GM12878 (cell line): ENCODE measurements at regions of chr18 and their contacts with region 1.

Region 1: GRCh38 chr18:23503038-23503962 is at the start of gene RMC1:
- DNase-seq: peak; percentile 66
- ATAC-seq: peak; percentile 86
- H3K4me3 ChIP-seq: peak within 1 kb of the TSS; percentile 96
- H3K27ac ChIP-seq: peak within 1 kb of the TSS; percentile 94
- H3K4me1 ChIP-seq: peaks cover 18% of the 10 kb centered on the region
- H3K27me3 ChIP-seq: no peaks in the 10 kb centered on the region
- CTCF ChIP-seq: peak; percentile 20 to 38 (median 37); a peak in 5 of 6 replicates
- EP300 ChIP-seq: peak in 1 of 2 experiments; percentile 31; a peak in 1 of 4 replicates
- POLR2A ChIP-seq: peak; percentile 93
- RAD21 ChIP-seq: peak; percentile 41; the same call in 1 of the 2 replicates
- polyA plus RNA-seq, gene RMC1: 8.4 to 25.7 TPM

Region 2: DNA sequence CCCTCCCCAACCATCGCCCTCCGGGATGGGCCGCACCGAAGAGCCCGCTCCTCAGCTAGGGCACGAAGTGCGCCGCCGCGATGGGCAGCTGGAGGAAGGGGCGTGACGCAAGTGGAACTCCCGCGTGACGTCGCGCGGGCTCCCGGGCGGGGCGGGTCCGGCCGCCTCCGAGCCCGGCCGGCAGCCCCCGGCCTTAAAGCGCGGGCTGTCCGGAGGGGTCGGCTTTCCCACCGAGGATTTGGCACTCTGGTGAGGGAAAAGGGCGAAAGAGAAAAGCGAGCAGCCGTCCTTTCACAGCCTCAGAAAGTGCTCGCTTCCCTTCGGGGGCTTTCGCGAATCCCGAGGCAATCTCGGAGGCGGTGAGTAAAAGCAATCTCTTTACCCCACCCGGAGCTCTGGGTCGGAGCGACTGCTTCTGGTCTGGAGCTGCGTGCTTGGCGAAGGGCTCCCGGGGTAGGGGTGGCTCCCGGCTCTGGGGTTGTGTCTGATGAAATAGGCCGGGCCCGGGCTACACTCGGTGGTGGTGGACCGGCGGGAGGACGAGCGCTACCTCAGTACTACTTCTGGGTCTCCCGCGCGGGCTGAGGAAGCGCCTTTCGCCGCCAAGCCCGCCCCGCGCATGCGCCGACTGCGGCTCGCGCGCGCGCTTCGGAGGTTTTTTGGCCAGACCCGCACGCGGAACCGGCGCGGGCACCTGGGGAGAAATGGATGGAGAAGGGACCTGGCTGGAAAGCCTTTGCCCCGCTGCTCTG is 569.9 kb before region 1 on chr18 and contains the start of gene RBBP8:
- CTCF ChIA-PET with region 1: interaction called, 11 read pairs
- POLR2A ChIA-PET with region 1: interaction called, 4 read pairs
- RAD21 ChIA-PET with region 1: no interaction called
- SMC1A ChIA-PET with region 1: interaction called, 4 read pairs
- in situ Hi-C with region 1: no loop called
- intact Hi-C with region 1: loop called (anchors 10 kb)
- DNase-seq: peak; percentile 36
- ATAC-seq: peak; percentile 85
- H3K4me3 ChIP-seq: peak within 1 kb of the TSS; percentile 86
- H3K27ac ChIP-seq: peak within 1 kb of the TSS; percentile 92
- H3K4me1 ChIP-seq: peaks cover 6% of the 10 kb centered on the region
- H3K27me3 ChIP-seq: no peaks in the 10 kb centered on the region
- CTCF ChIP-seq: no peak
- EP300 ChIP-seq: no peak
- POLR2A ChIP-seq: peak; percentile 80
- RAD21 ChIP-seq: no peak
- polyA plus RNA-seq, gene RBBP8: 49.4 to 59.5 TPM

Region 3: GRCh38 chr18:23416298-23416697 is 87.0 kb before region 1 on chr18:
- CTCF ChIA-PET with region 1: interaction called, 8 read pairs
- POLR2A ChIA-PET with region 1: no interaction called
- RAD21 ChIA-PET with region 1: interaction called, 12 read pairs
- SMC1A ChIA-PET with region 1: interaction called, 6 read pairs
- in situ Hi-C with region 1: no loop called
- intact Hi-C with region 1: no loop called
- DNase-seq: no peak
- ATAC-seq: peak; percentile 29; the same call in 2 of the 3 replicates
- H3K4me3 ChIP-seq: no peak overlapping the region
- H3K27ac ChIP-seq: no peak overlapping the region
- H3K4me1 ChIP-seq: no peaks in the 10 kb centered on the region; the same call in 1 of the 2 replicates
- H3K27me3 ChIP-seq: no peaks in the 10 kb centered on the region
- CTCF ChIP-seq: no peak
- EP300 ChIP-seq: no peak
- POLR2A ChIP-seq: no peak
- RAD21 ChIP-seq: no peak

Region 4: GRCh38 chr18:23458830-23459529 is 44.3 kb before region 1 on chr18:
- CTCF ChIA-PET with region 1: interaction called, 19 read pairs
- POLR2A ChIA-PET with region 1: interaction called, 14 read pairs
- RAD21 ChIA-PET with region 1: interaction called, 11 read pairs
- SMC1A ChIA-PET with region 1: interaction called, 18 read pairs
- in situ Hi-C with region 1: no loop called
- intact Hi-C with region 1: loop called (anchors 5 kb)
- DNase-seq: no peak
- ATAC-seq: peak; percentile 85
- H3K4me3 ChIP-seq: peak overlapping the region; percentile 48; the same call in 1 of the 2 replicates
- H3K27ac ChIP-seq: no peak overlapping the region
- H3K4me1 ChIP-seq: no peaks in the 10 kb centered on the region
- H3K27me3 ChIP-seq: no peaks in the 10 kb centered on the region
- CTCF ChIP-seq: no peak
- EP300 ChIP-seq: no peak
- POLR2A ChIP-seq: no peak
- RAD21 ChIP-seq: no peak

Region 5: DNA sequence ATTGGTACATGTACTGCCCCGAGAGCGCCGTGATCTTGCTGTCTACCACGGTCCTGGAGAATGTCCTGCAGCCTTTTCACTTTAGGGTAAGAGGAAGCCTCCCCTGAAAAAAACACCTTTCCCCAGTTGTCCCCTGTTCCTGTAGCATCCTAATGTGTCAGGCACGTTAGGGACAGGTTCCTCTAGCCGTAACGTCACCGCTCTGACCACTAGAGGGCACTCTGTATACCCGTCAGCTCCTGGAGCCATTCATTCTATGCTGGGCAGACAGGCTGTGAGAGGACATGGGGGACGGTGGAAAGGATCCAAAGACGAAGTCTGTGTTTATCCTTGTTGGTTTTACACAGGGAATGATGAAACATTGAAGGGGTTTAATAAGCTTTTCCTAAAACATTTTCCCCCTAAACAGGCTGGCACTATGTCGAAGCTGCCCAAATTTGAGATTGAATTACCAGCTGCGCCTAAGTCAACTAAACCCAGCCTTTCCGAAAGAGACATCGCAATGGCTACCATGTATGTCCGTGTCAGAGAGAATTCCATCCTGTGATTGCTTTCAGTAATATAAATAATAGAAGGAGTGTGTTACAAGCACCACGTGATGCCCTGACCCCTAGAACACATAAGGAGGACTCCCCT is 12.7 kb after region 1 on chr18:
- CTCF ChIA-PET with region 1: interaction called, 30 read pairs
- POLR2A ChIA-PET with region 1: interaction called, 3 read pairs
- RAD21 ChIA-PET with region 1: interaction called, 7 read pairs
- SMC1A ChIA-PET with region 1: interaction called, 8 read pairs
- in situ Hi-C with region 1: no loop called
- intact Hi-C with region 1: no loop called
- DNase-seq: peak; percentile 39
- ATAC-seq: peak; percentile 99
- H3K4me3 ChIP-seq: no peak overlapping the region
- H3K27ac ChIP-seq: no peak overlapping the region
- H3K4me1 ChIP-seq: peaks cover 3% of the 10 kb centered on the region; the same call in 1 of the 2 replicates
- H3K27me3 ChIP-seq: no peaks in the 10 kb centered on the region
- CTCF ChIP-seq: peak; percentile 89 to 97 (median 94)
- EP300 ChIP-seq: no peak
- POLR2A ChIP-seq: no peak
- RAD21 ChIP-seq: peak; percentile 76

Region 6: GRCh38 chr18:23812546-23813440 is 309.5 kb after region 1 on chr18:
- CTCF ChIA-PET with region 1: no interaction called
- POLR2A ChIA-PET with region 1: no interaction called
- RAD21 ChIA-PET with region 1: interaction called, 3 read pairs
- SMC1A ChIA-PET with region 1: interaction called, 5 read pairs
- in situ Hi-C with region 1: no loop called
- intact Hi-C with region 1: loop called (anchors 5 kb)
- DNase-seq: no peak
- ATAC-seq: no peak
- H3K4me3 ChIP-seq: no peak overlapping the region
- H3K27ac ChIP-seq: no peak overlapping the region
- H3K4me1 ChIP-seq: peaks cover 15% of the 10 kb centered on the region
- H3K27me3 ChIP-seq: no peaks in the 10 kb centered on the region; a peak in 1 of 4 replicates
- CTCF ChIP-seq: peak; percentile 30 to 53 (median 38); a peak in 3 of 6 replicates
- EP300 ChIP-seq: no peak
- POLR2A ChIP-seq: no peak
- RAD21 ChIP-seq: peak; percentile 67